Activated B cell treated with CpG ODN at 0.5 μM for 24 hours (primary cell): ENCODE measurements at regions of chr12 and their contacts with region 1.

Region 1: DNA sequence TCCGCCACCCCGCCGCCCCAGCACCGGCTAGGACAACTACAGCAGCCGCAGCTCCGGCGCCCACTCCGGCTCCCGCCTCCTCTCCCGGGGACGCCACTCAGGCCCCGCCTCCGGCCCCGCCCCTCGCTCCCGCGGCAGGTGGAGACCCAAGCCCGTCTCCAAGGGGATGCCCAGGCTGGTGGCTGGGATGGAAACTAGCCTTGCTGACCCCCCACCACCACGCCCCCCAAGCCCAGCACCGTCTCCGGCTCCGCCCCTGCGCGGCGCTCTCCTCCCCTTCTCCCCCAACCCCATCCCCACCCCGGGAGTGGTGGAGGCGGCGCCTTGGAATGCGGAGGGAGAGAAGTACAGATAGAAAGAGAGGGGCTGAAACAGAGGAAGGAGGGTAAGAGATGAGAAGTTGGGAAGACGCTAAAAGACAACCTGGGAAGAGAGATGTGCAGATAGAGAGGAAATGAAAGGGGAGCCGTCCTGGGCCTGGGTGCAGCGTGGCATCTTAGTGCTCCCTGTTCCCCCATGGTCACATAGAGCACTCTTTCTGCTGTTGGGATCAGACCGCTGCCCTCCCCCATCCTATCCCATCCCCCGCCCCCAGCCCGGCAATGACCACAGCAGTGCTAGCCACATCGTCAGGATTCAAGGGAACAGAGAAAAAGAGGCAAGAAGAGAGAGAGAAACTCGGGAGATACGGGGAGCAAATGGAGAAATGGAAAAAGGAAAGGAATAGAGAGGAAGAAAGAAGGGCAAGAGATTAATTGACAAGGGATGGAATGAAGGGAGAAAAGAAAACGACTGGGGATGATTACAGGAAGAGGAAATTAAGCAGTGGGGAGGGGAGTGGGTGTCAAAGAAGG is at the start of gene ITGA7:
- DNase-seq: peak; percentile 64
- ATAC-seq: peak; percentile 89
- H3K4me3 Mint-ChIP-seq: peak within 1 kb of the TSS; percentile 86
- H3K27ac Mint-ChIP-seq: no peak within 1 kb of the TSS
- H3K4me1 Mint-ChIP-seq: peaks cover 23% of the 10 kb centered on the region
- H3K27me3 Mint-ChIP-seq: peaks cover 4% of the 10 kb centered on the region
- CTCF ChIP-seq: no peak
- total RNA-seq, gene ITGA7: 1.4 and 2.1 TPM in 2 replicates

Region 2: DNA sequence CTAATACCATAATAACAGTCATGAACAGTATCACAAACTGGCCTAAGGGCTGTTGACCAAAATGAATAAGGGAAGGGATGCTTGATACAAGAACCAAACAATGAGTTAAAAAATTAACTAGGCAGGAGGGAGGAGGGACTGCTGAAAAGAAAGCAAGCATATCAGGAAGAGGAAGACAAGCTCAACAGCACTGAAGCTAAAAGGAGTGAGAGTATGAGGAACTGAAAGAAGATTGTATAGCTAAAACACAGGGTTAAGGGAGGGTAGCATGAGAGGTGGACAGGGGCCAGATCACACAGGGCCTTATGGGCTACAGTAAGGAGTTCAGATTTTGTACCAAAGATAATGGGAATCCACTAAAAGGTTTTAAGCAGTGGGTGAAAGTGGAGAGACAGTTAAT is 34.4 kb before region 1 on chr12:
- CTCF ChIA-PET with region 1: no interaction called
- POLR2A ChIA-PET with region 1: no interaction called
- intact Hi-C with region 1: loop called (anchors 2 kb)
- DNase-seq: no peak
- ATAC-seq: peak; percentile 99
- H3K4me3 Mint-ChIP-seq: peak overlapping the region; percentile 21
- H3K27ac Mint-ChIP-seq: peak overlapping the region; percentile 90
- H3K4me1 Mint-ChIP-seq: peaks cover 28% of the 10 kb centered on the region
- H3K27me3 Mint-ChIP-seq: no peaks in the 10 kb centered on the region
- CTCF ChIP-seq: no peak

Region 3: GRCh38 chr12:55681142-55682077 is 26.7 kb before region 1 on chr12:
- CTCF ChIA-PET with region 1: no interaction called
- POLR2A ChIA-PET with region 1: interaction called, 8 read pairs
- intact Hi-C with region 1: loop called (anchors 2 kb)
- DNase-seq: no peak
- ATAC-seq: peak; percentile 28
- H3K4me3 Mint-ChIP-seq: peak overlapping the region; percentile 68
- H3K27ac Mint-ChIP-seq: no peak overlapping the region
- H3K4me1 Mint-ChIP-seq: peaks cover 33% of the 10 kb centered on the region
- H3K27me3 Mint-ChIP-seq: no peaks in the 10 kb centered on the region
- CTCF ChIP-seq: no peak

Region 4: DNA sequence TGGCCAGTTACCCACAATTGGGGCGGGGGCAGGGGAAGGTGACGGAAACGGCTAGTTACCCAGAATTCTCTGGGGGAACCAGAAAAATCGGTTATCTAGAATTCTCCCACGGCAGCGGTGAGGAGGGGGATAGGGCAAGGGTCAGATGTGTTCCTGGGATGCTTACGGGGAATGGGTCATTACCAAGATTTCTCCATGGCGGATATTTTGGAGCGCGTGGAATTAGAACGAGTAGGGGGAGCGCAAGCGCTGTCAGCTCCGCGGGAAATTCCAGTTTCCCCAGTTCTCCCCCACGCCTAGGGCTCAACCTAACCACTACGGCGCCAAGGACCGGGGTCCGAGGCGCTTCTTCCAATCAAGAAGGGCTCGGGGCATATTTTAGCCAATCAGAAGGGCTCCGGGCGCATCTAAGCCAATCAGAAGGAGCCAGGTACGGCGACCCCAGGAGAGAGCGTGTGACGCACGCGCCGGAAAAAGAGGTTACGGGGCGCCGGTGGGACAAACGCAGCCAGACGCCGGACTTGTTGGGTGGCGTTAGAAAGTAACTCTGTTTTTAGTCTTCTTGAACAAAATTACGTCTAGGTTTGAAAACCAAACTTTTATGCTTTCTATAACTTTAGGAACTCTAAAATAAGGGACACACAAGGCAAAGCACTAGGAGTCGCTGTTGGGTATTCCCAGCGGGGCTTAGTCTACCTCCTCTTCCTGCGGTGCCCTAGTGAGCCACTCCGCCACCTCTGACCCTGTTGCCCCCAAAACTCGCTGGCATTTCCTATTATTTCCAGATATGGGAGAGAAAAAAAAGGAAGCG is 625.8 kb after region 1 on chr12 and contains the start of gene PAN2:
- CTCF ChIA-PET with region 1: no interaction called
- POLR2A ChIA-PET with region 1: no interaction called
- intact Hi-C with region 1: no loop called
- DNase-seq: peak; percentile 85
- ATAC-seq: peak; percentile 91
- H3K4me3 Mint-ChIP-seq: peak within 1 kb of the TSS; percentile 96
- H3K27ac Mint-ChIP-seq: peak within 1 kb of the TSS; percentile 100
- H3K4me1 Mint-ChIP-seq: peaks cover 46% of the 10 kb centered on the region
- H3K27me3 Mint-ChIP-seq: no peaks in the 10 kb centered on the region
- CTCF ChIP-seq: no peak
- total RNA-seq, gene PAN2: 86.3 and 98.9 TPM in 2 replicates